Ovary (tissue), 10 donors: ENCODE measurements at regions of chr7 and their contacts with region 1.

Region 1: DNA sequence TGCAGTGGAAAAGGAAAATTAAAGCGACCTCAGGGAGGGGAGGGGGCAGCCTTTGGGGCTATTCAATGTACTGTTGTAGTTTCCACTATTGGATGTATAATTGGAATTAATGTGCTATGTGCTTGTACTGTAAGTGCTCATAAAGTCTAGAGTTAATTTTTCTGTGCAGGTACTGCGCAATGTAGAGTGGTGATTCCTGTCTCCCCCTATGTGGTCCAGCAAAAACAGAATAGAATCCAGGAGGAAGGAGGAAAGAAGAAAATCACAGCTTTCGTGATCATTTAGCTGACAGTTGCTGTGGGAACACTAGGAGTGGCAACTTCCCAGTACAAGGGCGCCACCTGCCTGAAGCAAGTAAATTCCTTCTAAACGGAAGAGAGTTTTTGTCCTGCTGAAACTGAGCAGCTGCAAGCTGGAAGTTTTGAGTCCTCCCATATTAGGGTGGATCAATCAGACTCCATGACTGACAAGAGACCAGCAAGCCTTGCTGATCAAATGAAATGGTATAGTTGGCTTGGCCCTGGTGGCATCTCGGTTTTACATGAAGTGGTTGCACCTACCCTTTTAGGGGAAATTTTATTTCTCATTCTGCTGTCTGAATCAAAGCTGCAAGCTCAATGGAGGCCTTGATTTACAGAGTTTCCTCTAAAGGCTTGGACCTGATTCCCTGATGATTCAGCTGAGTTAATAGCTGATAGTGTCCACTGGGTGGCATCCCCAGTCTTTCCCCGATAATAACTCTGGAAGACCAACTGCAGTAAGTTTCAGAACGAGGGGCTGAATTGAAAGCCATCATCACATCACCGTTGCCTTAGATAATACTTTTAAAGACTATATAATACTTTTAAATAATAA is 299.8 kb downstream of the HGF start:
- DNase-seq: peak; percentile 59 to 79 (median 77)
- H3K4me3 ChIP-seq: no peak overlapping the region
- H3K27ac ChIP-seq: no peak overlapping the region
- H3K4me1 ChIP-seq: no peaks in the 10 kb centered on the region
- H3K27me3 ChIP-seq: no peaks in the 10 kb centered on the region
- CTCF ChIP-seq: peak; percentile 12 to 64 (median 51)
- EP300 ChIP-seq: no peak
- POLR2A ChIP-seq: no peak

Region 2: DNA sequence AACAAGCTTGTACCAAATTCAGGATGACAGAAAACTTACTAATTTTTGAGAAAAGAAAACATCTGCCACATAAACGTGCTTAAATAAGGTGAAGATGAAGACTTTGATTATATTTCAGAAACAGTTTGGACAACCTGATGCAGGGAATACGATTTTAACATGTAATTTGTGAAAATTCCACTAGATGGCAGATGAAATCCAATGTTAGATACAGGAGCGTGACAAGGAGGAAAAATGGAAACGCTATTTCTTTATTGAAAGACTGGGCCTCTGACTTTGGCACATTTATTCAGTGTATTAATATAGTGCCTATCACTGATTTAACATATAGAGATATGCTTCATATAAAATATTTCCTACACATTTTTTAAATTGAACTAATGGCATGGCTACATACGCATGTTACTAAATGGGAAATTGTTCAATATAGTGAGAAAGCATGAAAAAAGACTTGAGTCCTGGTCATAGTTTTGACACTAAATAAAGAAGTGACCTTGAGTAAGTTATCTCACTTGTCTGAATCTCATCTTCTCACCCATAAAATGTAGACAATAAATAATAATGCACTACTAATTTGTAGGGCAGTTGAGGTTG is 771.0 kb before region 1 on chr7:
- intact Hi-C with region 1: loop called (anchors 2 to 10 kb)
- DNase-seq: no peak
- H3K4me3 ChIP-seq: no peak overlapping the region
- H3K27ac ChIP-seq: no peak overlapping the region
- H3K4me1 ChIP-seq: no peaks in the 10 kb centered on the region
- H3K27me3 ChIP-seq: no peaks in the 10 kb centered on the region
- CTCF ChIP-seq: peak in 2 of 3 donors; percentile 70
- EP300 ChIP-seq: no peak
- POLR2A ChIP-seq: no peak

Region 3: GRCh38 chr7:81549484-81550016 is 79.5 kb after region 1 on chr7:
- intact Hi-C with region 1: no loop called
- DNase-seq: no peak
- H3K4me3 ChIP-seq: no peak overlapping the region
- H3K27ac ChIP-seq: no peak overlapping the region
- H3K4me1 ChIP-seq: no peaks in the 10 kb centered on the region
- H3K27me3 ChIP-seq: no peaks in the 10 kb centered on the region
- CTCF ChIP-seq: no peak
- EP300 ChIP-seq: no peak
- POLR2A ChIP-seq: no peak

Region 4: GRCh38 chr7:81594767-81595166 is 124.7 kb after region 1 on chr7:
- intact Hi-C with region 1: no loop called
- DNase-seq: no peak
- H3K4me3 ChIP-seq: no peak overlapping the region
- H3K27ac ChIP-seq: no peak overlapping the region
- H3K4me1 ChIP-seq: no peaks in the 10 kb centered on the region
- H3K27me3 ChIP-seq: no peaks in the 10 kb centered on the region
- CTCF ChIP-seq: no peak
- EP300 ChIP-seq: no peak
- POLR2A ChIP-seq: no peak